Activated CD8-positive, alpha-beta memory T cell treated with anti-CD3 and anti-CD28 coated beads, Interleukin-2, amount 10 ng/mL, durations not matched to agents 7 days and 5 days (primary cell): ENCODE measurements at regions of chr2 and their contacts with region 1.

Region 1: DNA sequence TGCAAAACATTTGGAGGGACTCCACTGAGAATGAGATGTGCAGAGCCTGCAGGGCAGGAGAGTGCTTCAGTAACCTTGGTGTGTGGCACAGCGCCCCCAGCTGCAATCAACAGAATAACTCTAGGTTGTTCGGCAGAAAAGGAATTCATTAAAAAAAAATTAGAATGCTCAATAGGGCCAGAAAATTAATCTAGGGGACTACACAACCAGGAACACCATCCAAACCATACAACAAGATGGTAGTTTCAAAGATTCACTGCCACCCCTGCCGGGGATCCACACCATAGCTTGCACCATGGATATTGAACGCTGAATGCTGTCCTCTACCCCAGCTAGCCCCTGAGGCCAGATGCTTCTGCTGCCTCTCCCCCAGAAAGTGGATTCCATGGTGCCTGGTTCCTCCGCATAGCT is 50.1 kb downstream of the THUMPD2 start:
- DNase-seq: no peak
- ATAC-seq: no peak
- H3K4me3 Mint-ChIP-seq: no peak overlapping the region
- H3K27ac Mint-ChIP-seq: no peak overlapping the region
- H3K4me1 Mint-ChIP-seq: no peaks in the 10 kb centered on the region
- H3K27me3 Mint-ChIP-seq: peaks cover 5% of the 10 kb centered on the region

Region 2: GRCh38 chr2:39379643-39380524 is 349.1 kb before region 1 on chr2:
- CTCF ChIA-PET with region 1: interaction called, 35 read pairs
- DNase-seq: no peak
- ATAC-seq: peak; percentile 64
- H3K4me3 Mint-ChIP-seq: no peak overlapping the region
- H3K27ac Mint-ChIP-seq: no peak overlapping the region
- H3K4me1 Mint-ChIP-seq: peaks cover 9% of the 10 kb centered on the region
- H3K27me3 Mint-ChIP-seq: no peaks in the 10 kb centered on the region

Region 3: GRCh38 chr2:39642051-39642742 is 86.7 kb before region 1 on chr2:
- CTCF ChIA-PET with region 1: no interaction called
- DNase-seq: no peak
- ATAC-seq: no peak
- H3K4me3 Mint-ChIP-seq: no peak overlapping the region
- H3K27ac Mint-ChIP-seq: no peak overlapping the region
- H3K4me1 Mint-ChIP-seq: peaks cover 2% of the 10 kb centered on the region
- H3K27me3 Mint-ChIP-seq: peaks cover 12% of the 10 kb centered on the region

Region 4: DNA sequence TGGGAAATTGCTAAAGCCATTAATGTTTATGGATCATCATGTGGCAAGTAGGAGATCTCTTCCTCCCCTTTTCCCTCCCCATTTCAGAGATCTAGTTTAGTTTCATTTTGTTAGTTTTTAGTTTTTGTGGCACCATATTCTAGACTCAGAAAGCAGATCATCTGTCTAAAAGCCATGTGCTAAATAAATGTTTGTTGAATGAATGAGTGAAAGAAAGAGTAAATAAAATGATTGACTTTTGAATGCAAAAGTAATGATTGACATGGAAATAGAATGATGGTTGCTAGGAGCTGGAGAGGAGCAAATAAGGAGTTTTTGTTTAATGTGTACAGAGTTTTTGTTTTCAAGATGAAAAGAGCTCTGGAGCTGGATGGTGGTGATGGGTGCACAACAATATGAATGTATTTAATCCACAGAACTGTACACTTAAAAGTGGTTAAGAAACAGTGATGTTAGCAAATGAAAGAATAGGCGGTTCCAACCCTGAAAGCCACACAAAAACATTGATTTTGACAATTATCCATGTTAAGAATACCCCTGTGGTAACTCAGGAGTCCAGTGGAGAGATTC is 39.6 kb before region 1 on chr2:
- CTCF ChIA-PET with region 1: no interaction called
- DNase-seq: no peak
- ATAC-seq: no peak
- H3K4me3 Mint-ChIP-seq: no peak overlapping the region
- H3K27ac Mint-ChIP-seq: no peak overlapping the region
- H3K4me1 Mint-ChIP-seq: no peaks in the 10 kb centered on the region
- H3K27me3 Mint-ChIP-seq: peaks cover 46% of the 10 kb centered on the region

Region 5: DNA sequence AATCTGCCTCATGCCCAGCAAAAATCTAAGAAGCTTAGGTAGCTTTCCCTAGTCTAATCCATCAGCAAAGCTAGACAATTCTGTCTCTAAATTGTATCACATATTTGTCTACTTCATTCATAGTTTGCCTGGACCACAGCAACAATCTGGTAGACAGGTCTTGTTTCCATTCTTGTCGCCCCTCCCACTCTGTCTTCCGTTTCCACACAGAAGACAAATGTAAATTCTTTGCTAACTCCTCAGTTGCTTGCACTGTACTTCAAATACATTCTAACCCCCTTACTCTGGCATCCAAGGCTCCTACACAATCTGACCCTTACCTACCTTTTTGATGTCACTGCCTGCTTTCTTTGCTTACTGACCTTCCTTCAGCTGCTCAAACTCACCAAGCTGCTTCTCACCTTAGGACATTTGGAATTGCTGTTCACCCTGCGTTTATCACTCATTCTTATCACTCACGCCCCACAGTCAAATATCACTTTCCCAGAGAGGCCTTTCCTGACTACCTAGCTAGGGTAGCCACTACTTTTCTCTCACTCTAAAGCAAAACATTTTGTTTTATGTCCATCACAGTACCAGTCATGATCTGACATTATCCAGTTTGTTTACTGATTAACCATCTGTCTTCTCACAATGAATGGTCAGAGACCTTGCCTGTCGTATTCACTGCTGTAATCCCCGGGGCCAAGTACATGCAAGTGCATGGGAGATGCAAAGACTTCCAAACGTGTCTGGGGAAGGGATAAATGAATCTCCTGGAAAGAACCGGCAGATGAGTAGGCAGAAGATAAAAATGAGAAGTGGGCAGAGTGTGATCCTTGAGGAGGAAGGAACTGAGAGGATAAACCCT is 10.2 kb after region 1 on chr2:
- CTCF ChIA-PET with region 1: interaction called, 10 read pairs
- DNase-seq: no peak
- ATAC-seq: no peak
- H3K4me3 Mint-ChIP-seq: no peak overlapping the region
- H3K27ac Mint-ChIP-seq: no peak overlapping the region
- H3K4me1 Mint-ChIP-seq: no peaks in the 10 kb centered on the region
- H3K27me3 Mint-ChIP-seq: no peaks in the 10 kb centered on the region